PC-9 (cell line): ENCODE measurements at regions of chr17 and their contacts with region 1.

Region 1: DNA sequence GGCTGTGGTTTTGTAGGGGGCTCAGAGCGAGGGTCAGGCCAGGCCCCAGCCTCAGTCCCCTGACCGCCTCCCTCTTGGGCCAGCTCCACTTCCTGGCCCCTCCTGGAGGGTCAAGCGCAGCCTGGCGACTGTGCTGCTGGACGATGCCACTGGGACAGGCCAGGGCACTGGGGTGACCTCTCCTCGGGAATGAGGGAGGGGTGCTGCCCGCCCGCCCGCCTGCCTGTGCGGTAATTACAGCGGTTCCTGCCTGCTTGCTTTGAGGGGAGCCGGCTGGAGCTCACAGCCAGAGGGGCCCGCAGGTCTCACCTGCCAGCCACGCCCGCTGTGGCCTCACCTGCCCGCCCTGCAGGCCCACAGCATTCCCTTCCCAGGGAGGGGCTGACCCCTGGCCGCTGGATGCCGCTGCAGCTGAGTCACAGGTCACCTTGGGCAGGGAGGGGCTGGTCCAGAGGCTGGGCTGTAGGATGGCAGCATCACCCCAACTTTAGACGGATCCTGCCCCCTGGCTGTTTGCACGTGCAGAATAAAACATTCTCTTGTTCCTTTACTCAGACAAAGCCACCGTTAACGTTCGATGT is 76.7 kb upstream of the CBX4 start:
- DNase-seq: peak; percentile 87 to 97
- H3K4me3 ChIP-seq: no peak overlapping the region
- H3K27ac ChIP-seq: no peak overlapping the region
- H3K4me1 ChIP-seq: peaks cover 42% of the 10 kb centered on the region
- H3K27me3 ChIP-seq: no peaks in the 10 kb centered on the region
- CTCF ChIP-seq: peak; percentile 64

Region 2: GRCh38 chr17:79721993-79722671 is 193.8 kb before region 1 on chr17:
- CTCF ChIA-PET with region 1: no interaction called
- POLR2A ChIA-PET with region 1: no interaction called
- intact Hi-C with region 1: loop called (anchors 1 kb)
- DNase-seq: no peak
- H3K4me3 ChIP-seq: no peak overlapping the region
- H3K27ac ChIP-seq: no peak overlapping the region
- H3K4me1 ChIP-seq: no peaks in the 10 kb centered on the region
- H3K27me3 ChIP-seq: no peaks in the 10 kb centered on the region
- CTCF ChIP-seq: peak; percentile 53

Region 3: DNA sequence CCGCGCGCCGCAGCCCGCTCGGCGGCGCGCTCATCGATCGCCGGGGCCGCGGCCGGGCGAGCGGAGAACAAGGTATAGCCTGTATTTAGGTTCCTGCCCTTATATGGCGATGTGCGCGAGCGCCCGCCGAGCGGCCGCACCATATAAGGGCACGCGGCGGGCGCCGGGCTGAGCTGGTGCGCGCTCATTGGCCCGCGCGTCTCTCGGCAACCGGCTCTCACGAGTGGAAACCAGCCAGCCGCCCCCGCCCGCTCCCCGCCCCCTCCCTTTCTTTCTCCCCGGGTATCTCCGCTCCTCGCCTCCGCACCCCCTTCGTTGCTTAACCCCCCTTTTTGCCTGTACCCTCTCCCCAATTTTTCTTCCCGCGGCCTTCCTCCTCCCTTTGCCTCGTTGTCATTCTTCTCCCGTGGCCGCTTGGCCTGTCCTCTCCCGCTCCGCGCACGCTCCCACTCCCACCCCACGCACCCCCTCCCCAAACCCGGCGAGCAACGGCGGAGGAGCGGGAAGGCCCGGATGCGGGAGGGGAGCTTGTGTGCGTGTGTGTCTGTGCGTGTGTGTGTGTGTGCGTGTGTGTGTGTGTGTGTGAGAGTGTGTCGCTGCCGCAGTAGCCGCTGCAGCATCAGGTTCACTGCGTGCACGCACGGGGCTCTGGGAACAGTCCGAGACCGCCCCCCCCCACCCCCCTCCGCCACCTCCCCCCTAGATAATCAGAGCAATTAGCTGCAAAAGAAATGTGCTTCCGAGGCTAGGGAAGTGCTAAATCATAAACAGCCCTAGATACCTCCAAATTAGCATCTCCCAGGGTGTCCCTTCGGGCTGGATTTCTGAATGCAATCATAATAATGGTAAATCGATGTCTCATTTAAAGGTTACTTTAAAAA is 105.6 kb before region 1 on chr17:
- CTCF ChIA-PET with region 1: interaction called, 4 read pairs
- POLR2A ChIA-PET with region 1: no interaction called
- intact Hi-C with region 1: loop called (anchors 1 kb)
- DNase-seq: peak; percentile 68 to 76
- H3K4me3 ChIP-seq: peak overlapping the region; percentile 54; the same call in 1 of the 2 replicates
- H3K27ac ChIP-seq: no peak overlapping the region
- H3K4me1 ChIP-seq: peaks cover 39% of the 10 kb centered on the region; the same call in 1 of the 2 replicates
- H3K27me3 ChIP-seq: peaks cover 3% of the 10 kb centered on the region; the same call in 1 of the 2 replicates
- CTCF ChIP-seq: no peak

Region 4: DNA sequence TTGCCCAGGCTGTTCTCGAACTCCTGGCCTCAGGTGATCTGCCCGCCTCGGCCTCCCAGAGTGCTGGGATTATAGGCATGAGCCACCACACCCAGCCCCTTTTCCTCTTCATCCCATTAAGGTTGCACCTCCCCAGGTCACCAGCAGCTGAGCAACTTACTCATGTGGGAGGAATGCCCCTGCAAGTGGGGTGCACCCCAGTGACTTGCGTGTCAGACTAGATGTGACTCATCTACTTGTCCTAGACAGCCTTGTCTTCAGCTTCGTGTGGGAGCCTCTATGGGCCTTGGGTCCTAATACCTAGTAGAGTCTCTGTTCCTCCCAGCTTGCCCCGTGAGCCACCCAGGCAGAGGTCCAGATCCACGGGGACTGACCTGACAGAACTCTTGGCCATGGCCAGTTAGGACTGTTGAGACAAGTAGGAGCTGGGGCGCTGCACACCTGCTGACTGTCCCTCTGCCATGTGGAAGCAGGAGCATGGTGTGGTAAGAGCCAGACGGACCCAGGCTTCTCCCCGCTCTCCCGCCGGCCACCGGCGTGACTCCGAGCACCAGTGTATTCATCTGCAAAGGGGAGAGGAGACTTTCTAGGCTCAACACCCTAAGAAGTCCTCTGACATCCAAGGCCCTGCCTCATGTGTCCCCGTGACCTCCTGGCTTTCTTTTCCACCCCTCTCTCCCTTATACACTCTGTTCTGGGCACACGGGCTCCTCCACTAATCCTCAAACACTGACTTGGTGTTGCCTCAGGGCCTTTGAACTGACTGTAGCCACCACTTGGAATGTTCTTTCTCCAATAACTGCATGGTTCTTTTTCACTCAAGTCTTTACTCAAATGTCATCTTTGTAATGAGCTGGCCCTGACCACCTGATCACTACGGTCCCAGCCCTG is 65.1 kb before region 1 on chr17:
- CTCF ChIA-PET with region 1: interaction called, 10 read pairs
- POLR2A ChIA-PET with region 1: no interaction called
- intact Hi-C with region 1: no loop called
- DNase-seq: peak; percentile 79 to 92
- H3K4me3 ChIP-seq: no peak overlapping the region
- H3K27ac ChIP-seq: peak overlapping the region; percentile 59
- H3K4me1 ChIP-seq: peaks cover 20% of the 10 kb centered on the region
- H3K27me3 ChIP-seq: no peaks in the 10 kb centered on the region
- CTCF ChIP-seq: no peak

Region 5: GRCh38 chr17:79942591-79943346 is 26.8 kb after region 1 on chr17:
- CTCF ChIA-PET with region 1: no interaction called
- POLR2A ChIA-PET with region 1: no interaction called
- intact Hi-C with region 1: no loop called
- DNase-seq: no peak
- H3K4me3 ChIP-seq: no peak overlapping the region
- H3K27ac ChIP-seq: no peak overlapping the region
- H3K4me1 ChIP-seq: no peaks in the 10 kb centered on the region
- H3K27me3 ChIP-seq: no peaks in the 10 kb centered on the region
- CTCF ChIP-seq: no peak